Gastrocnemius medialis (tissue), 4 donors: ENCODE measurements at regions of chr11 and their contacts with region 1.

Region 1: DNA sequence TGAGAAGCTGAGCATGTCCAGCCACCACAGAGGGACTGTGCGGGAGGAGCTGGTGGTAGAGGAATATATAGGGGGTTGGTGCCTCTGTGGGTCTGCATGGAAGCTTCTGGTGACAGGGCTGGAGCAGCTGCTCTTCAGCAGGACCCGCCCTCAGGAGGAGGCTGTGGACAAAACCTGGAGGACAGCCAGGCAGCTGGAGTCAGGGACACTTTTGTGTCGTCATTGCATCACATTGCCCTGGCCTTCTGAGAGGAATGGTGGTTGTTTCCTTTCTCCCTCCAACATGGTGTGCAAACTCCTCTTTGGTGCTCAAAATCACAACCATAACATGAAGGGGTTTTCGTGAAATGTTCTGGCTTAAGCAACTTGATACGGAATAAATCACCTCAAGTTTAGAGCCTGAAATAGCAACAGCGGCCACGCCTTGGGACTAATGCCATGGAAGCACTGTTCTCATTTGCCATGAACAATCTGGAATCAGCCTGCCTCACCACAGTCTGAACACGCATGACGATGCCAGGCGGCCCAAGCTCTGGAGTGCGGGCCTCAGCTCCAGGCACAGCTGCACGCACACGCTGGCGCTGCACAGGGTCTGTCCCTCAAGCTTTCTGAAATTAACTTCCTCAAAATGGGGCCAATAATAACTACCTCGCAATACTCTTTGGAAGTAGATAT is 17.1 kb upstream of the CSRP3 start:
- DNase-seq: peak; percentile 80 to 90
- ATAC-seq: peak; percentile 91 to 92
- H3K4me3 ChIP-seq: peak overlapping the region; percentile 39 to 65 (median 40)
- H3K27ac ChIP-seq: peak overlapping the region; percentile 86 to 94 (median 90)
- H3K4me1 ChIP-seq: peaks cover 38 to 45% of the 10 kb centered on the region in 2 donors
- H3K27me3 ChIP-seq: no peaks in the 10 kb centered on the region
- CTCF ChIP-seq: no peak
- POLR2A ChIP-seq: peak in 1 of 2 donors; percentile 32

Region 2: DNA sequence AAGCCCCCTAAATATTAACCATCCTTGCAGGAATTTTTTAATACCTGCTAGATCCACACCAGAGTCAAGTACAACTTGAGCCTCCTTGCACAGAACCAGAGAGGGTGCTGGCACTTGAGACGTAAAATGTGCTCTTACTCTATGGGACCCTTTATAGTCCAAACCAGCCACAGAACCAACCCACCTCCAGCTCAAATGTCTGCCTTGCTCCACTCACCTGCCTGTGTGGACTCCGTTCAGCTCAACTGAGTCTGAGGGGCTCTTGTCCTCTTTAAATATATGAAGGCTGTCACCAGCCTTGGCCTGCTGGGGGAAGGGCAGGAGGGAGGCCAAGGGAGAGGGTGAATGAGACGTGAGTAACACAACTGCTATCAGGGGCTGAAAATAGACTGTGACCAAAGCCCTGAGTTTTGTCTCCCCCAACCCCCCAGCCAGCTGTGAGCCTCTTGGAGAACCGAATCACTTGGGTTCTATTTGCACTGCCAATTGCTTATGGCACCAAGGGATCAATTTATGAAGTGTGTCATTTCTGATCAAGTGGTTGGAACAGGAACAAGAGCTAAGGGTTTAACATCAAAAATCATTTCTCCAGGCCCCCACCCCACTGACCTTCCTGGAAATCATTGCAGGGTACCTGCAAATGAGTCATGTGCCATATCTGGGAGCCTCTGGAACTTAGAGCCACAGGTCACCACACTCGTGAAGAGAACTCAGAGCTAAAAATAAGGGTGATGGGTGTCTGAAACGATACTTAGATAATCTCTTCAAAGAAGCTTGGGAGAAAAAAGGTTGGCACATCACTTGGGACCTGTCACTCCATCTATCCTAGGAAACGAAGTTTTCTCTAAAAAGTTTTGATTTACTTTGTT is 17.0 kb before region 1 on chr11 and contains the start of gene CSRP3:
- in situ Hi-C with region 1: no loop called
- intact Hi-C with region 1: loop called (anchors 1 kb)
- DNase-seq: peak; percentile 71 to 84
- ATAC-seq: peak; percentile 86 to 91
- H3K4me3 ChIP-seq: peak within 1 kb of the TSS; percentile 30 to 42 (median 36)
- H3K27ac ChIP-seq: peak within 1 kb of the TSS; percentile 90 to 94 (median 94)
- H3K4me1 ChIP-seq: peaks cover 37 to 39% of the 10 kb centered on the region in 2 donors
- H3K27me3 ChIP-seq: no peaks in the 10 kb centered on the region
- CTCF ChIP-seq: peak in 1 of 5 experiments; percentile 13
- POLR2A ChIP-seq: peak; percentile 43 to 66
- total RNA-seq, gene CSRP3: 2.2 to 300 (median 89.5) TPM

Region 3: GRCh38 chr11:19553683-19554333 is 334.9 kb after region 1 on chr11:
- in situ Hi-C with region 1: no loop called
- intact Hi-C with region 1: no loop called
- DNase-seq: peak; percentile 45 to 64
- ATAC-seq: peak; percentile 45 to 80
- H3K4me3 ChIP-seq: no peak overlapping the region
- H3K27ac ChIP-seq: no peak overlapping the region
- H3K4me1 ChIP-seq: no peaks in the 10 kb centered on the region
- H3K27me3 ChIP-seq: no peaks in the 10 kb centered on the region
- CTCF ChIP-seq: peak; percentile 61 to 87 (median 84)
- POLR2A ChIP-seq: no peak

Region 4: DNA sequence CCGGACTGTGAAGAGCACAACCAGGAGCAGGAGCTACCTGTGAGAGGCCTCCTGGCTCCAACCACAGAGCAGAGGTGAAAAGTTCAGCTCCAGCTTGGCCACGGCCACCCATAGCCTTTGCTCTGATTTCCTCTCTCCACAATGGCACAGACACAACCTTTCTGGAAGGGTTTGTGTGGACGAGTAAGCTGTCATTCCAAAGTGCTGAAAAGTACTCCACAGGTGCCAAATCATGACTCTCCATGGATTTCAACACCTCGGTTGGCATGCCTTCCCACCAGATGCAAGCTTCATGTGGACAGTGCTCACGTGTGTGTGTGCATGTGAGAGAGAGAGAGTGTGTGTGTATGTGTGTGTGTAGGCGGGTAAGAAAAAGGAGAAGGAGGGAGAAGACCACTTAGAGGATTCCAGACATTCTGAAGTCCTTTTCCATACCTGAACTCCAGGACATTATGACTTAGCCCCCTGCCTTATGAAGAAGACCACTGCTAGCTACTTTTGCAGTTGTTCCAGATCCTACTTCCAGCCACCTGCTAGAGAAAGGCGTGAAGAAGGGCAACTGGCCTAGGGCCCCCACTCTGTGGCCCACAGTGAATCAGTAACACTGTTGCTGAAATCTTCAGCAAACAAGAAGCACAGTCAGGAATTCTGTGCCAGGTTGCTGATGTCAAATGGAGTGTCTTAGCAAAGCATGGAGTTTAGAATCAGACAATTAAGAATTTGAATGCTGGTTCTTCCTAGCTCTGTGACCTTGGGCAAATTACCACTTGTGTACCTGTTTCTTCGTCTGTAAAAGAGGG is 479.8 kb after region 1 on chr11:
- in situ Hi-C with region 1: no loop called
- intact Hi-C with region 1: loop called (anchors 10 kb)
- DNase-seq: peak; percentile 88 to 94
- ATAC-seq: peak; percentile 94 to 95
- H3K4me3 ChIP-seq: no peak overlapping the region
- H3K27ac ChIP-seq: peak overlapping the region; percentile 53 to 72 (median 70)
- H3K4me1 ChIP-seq: peaks cover 39 to 40% of the 10 kb centered on the region in 2 donors
- H3K27me3 ChIP-seq: no peaks in the 10 kb centered on the region
- CTCF ChIP-seq: no peak
- POLR2A ChIP-seq: no peak